ENCODE measurements at regions of chr4 and their contacts with region 1.

Region 1: GRCh38 chr4:118740869-118741268 is 55.7 kb downstream of the METTL14 start:
- DNase-seq: no peak
- ATAC-seq: peak in 2 of 8 donors; percentile 36 to 57
- H3K4me3 ChIP-seq: peak overlapping the region in 5 of 10 donors; percentile 4 to 20 (median 15)
- H3K27ac ChIP-seq: peak overlapping the region in 9 of 10 donors; percentile 11 to 82 (median 64)
- H3K4me1 ChIP-seq: peaks cover 3 to 32% (median 20%) of the 10 kb centered on the region in 9 donors
- H3K27me3 ChIP-seq: no peaks in the 10 kb centered on the region
- CTCF ChIP-seq: peak; percentile 21 to 70 (median 54)

Region 2: DNA sequence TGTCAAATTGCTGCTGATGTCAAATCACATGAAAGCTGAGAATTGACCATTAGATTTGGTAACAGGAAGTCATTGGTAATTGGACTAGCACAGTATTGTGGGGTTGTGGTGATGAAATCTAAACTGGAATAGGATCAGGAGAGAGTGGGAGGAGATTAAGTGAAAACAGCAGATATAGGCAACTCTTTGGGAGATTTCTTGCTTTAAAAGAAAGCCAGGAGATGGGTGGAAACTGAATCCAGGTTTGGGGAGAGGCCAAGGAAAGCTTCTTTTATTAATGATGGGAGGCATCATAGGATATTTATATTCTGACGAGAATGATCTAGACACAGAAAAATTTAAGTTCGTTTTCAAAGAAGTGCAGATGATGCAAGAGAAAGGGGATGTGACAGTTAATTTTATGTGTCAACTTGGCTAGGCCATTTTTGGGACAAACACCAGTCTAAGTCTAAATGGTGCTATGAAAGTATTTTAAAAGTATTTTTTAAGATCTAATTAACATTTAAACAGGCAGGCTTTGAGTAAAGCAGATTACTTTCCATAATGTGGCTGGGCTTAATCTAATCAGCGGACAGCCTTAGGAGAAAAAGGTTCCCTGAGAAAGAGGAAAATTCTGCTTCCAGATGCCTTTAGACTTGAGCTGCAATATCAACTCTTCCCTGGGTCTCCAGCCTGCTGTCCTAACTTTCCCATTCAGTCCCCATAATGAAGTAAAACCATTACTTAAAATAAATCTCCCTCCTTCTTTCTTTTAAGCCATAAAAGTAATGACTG is 70.3 kb after region 1 on chr4:
- intact Hi-C with region 1: loop called in 1 of 10 experiments (anchors 10 kb)
- DNase-seq: no peak
- ATAC-seq: peak in 3 of 8 donors; percentile 34 to 68 (median 47)
- H3K4me3 ChIP-seq: no peak overlapping the region
- H3K27ac ChIP-seq: peak overlapping the region in 3 of 10 donors; percentile 2 to 59 (median 20)
- H3K4me1 ChIP-seq: peaks cover 0 to 26% (median 10%) of the 10 kb centered on the region in 9 donors
- H3K27me3 ChIP-seq: no peaks in the 10 kb centered on the region
- CTCF ChIP-seq: no peak

Region 3: GRCh38 chr4:118888666-118889311 is 147.9 kb after region 1 on chr4 and contains the start of gene SYNPO2:
- intact Hi-C with region 1: loop called in 7 of 10 experiments (anchors 1 to 10 kb)
- DNase-seq: peak; percentile 81 to 84
- ATAC-seq: peak; percentile 84 to 94 (median 90)
- H3K4me3 ChIP-seq: peak within 1 kb of the TSS; percentile 34 to 74 (median 66)
- H3K27ac ChIP-seq: peak within 1 kb of the TSS; percentile 78 to 93 (median 85)
- H3K4me1 ChIP-seq: peaks cover 0 to 19% (median 15%) of the 10 kb centered on the region in 9 donors
- H3K27me3 ChIP-seq: peaks cover 0 to 19% (median 0%) of the 10 kb centered on the region in 7 donors
- CTCF ChIP-seq: no peak
- total RNA-seq, gene SYNPO2: 197 to 405 (median 267) TPM

Region 4: DNA sequence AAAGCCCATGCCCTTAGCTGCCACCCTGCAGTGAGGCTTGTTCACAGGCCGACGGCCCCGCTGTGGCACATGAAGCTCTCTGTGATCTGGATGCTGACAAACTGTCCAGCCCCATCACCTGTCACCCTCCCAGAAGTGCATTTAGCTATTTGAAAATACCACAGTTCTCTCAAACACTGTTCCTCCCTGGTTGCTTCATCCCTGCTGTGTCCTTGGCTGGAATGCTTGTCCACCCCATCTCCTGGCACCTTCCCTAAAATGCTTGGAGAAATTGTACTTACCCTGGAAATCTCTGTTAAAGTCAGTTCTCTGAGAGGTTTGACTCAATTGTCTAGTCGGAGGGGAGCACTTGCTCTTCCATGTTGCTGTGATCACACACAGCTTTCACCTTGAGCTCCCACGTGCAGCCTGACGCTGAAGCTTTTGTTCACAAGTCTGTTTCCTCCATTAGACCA is 157.8 kb after region 1 on chr4:
- intact Hi-C with region 1: loop called in 4 of 10 experiments (anchors 5 to 10 kb)
- DNase-seq: peak; percentile 54 to 62
- ATAC-seq: peak; percentile 64 to 94 (median 86)
- H3K4me3 ChIP-seq: peak overlapping the region in 2 of 10 donors; percentile 4 to 7
- H3K27ac ChIP-seq: peak overlapping the region; percentile 38 to 93 (median 82)
- H3K4me1 ChIP-seq: peaks cover 4 to 85% (median 39%) of the 10 kb centered on the region in 9 donors
- H3K27me3 ChIP-seq: no peaks in the 10 kb centered on the region
- CTCF ChIP-seq: no peak

Region 5: GRCh38 chr4:118974758-118975157 is 233.9 kb after region 1 on chr4:
- intact Hi-C with region 1: loop called in 9 of 10 experiments (anchors 1 to 10 kb)
- DNase-seq: no peak
- ATAC-seq: peak in 2 of 8 donors; percentile 3 to 14
- H3K4me3 ChIP-seq: no peak overlapping the region
- H3K27ac ChIP-seq: peak overlapping the region in 4 of 10 donors; percentile 10 to 50 (median 27)
- H3K4me1 ChIP-seq: peaks cover 4 to 68% (median 44%) of the 10 kb centered on the region in 9 donors
- H3K27me3 ChIP-seq: no peaks in the 10 kb centered on the region
- CTCF ChIP-seq: no peak

Region 6: DNA sequence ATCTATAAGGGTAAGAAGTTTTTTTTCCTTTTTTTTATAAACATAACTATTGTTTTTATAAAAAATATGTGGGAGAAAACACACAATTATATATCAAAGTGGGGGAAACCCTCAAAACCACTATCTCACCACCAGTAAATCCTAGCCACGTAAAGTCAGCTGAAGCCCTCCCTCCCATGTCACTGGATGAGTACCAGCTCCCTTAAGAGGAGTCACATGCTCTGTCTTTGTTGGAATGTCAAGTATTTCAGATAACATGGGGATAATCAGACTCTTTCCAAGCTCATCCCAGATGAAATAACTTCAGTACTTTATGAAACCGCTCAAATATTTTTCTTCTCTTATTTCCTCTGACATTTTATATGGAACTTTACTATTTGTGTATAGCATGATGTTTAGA is 397.2 kb after region 1 on chr4:
- intact Hi-C with region 1: loop called in 1 of 10 experiments (anchors 10 kb)
- DNase-seq: no peak
- ATAC-seq: peak in 6 of 8 donors; percentile 35 to 76 (median 70)
- H3K4me3 ChIP-seq: peak overlapping the region; percentile 11 to 60 (median 47)
- H3K27ac ChIP-seq: peak overlapping the region in 9 of 10 donors; percentile 75 to 93 (median 87)
- H3K4me1 ChIP-seq: peaks cover 0 to 29% (median 16%) of the 10 kb centered on the region in 9 donors
- H3K27me3 ChIP-seq: no peaks in the 10 kb centered on the region
- CTCF ChIP-seq: no peak

Region 7: GRCh38 chr4:119300101-119300978 is 559.5 kb after region 1 on chr4:
- intact Hi-C with region 1: loop called in 1 of 10 experiments (anchors 10 kb)
- DNase-seq: peak; percentile 92 to 96
- ATAC-seq: peak; percentile 96 to 98 (median 97)
- H3K4me3 ChIP-seq: peak overlapping the region; percentile 49 to 96 (median 73)
- H3K27ac ChIP-seq: peak overlapping the region; percentile 59 to 97 (median 91)
- H3K4me1 ChIP-seq: peaks cover 8 to 43% (median 26%) of the 10 kb centered on the region in 9 donors
- H3K27me3 ChIP-seq: no peaks in the 10 kb centered on the region
- CTCF ChIP-seq: peak in 1 of 9 donors; percentile 24